Endothelial cell of umbilical vein (primary cell): ENCODE measurements at regions of chr11 and their contacts with region 1.

Region 1: GRCh38 chr11:9757809-9758636 is 94.1 kb downstream of the SWAP70 start:
- DNase-seq: peak; percentile 77
- H3K4me3 ChIP-seq: peak overlapping the region in 2 of 3 experiments; percentile 33 to 37
- H3K27ac ChIP-seq: peak overlapping the region; percentile 67
- H3K4me1 ChIP-seq: peaks cover 34% of the 10 kb centered on the region
- H3K27me3 ChIP-seq: no peaks in the 10 kb centered on the region
- CTCF ChIP-seq: peak; percentile 67 to 92
- POLR2A ChIP-seq: peak; percentile 85

Region 2: GRCh38 chr11:9527481-9528140 is 230.4 kb before region 1 on chr11:
- CTCF ChIA-PET with region 1: no interaction called
- POLR2A ChIA-PET with region 1: no interaction called
- dilution Hi-C with region 1: no loop called
- intact Hi-C with region 1: loop called (anchors 5 kb)
- DNase-seq: peak; percentile 96
- H3K4me3 ChIP-seq: peak overlapping the region in 1 of 3 experiments; percentile 20
- H3K27ac ChIP-seq: peak overlapping the region; percentile 82
- H3K4me1 ChIP-seq: peaks cover 27% of the 10 kb centered on the region
- H3K27me3 ChIP-seq: no peaks in the 10 kb centered on the region
- CTCF ChIP-seq: no peak
- POLR2A ChIP-seq: peak; percentile 21

Region 3: DNA sequence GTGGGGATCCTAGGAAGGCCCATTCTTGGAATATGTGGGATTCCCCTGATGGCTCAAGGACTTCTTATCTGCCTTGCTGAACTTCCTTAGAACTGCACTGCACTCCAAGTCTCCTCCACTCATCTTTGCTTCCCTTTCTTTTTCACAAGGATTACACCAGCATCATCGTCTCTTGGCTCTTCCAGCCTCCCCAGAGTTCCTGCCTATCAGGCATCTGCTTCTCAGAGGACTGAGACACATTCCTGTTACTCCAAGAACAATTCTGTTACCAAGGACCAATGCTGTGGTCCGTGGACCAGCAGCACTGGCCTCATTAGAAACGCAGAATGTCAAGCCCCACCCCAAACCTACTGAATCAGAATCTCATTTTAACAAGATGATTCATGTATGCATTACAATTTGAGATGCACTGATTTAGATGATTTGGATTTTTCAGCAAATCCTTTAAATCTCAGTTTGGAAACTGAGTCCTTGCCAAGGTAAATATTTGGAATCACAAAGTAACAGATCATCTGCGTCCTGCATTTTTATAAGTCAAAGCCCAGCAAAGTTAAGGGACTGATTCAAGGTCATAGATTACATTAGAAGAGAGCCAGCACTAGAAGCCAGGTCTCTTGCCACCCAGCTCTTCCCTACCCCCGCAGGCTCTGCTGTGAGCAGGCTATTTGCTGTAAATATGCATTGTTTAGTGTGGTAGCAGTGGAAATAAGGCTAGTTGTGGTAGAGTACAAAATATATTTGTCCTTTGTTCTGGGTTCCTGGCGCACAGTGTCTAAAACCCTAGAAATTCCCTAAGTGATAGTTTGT is 16.8 kb after region 1 on chr11:
- CTCF ChIA-PET with region 1: no interaction called
- POLR2A ChIA-PET with region 1: no interaction called
- dilution Hi-C with region 1: no loop called
- intact Hi-C with region 1: no loop called
- DNase-seq: peak; percentile 35
- H3K4me3 ChIP-seq: no peak overlapping the region
- H3K27ac ChIP-seq: no peak overlapping the region
- H3K4me1 ChIP-seq: peaks cover 6% of the 10 kb centered on the region
- H3K27me3 ChIP-seq: no peaks in the 10 kb centered on the region
- CTCF ChIP-seq: no peak
- POLR2A ChIP-seq: no peak

Region 4: GRCh38 chr11:9861860-9862725 is 104.1 kb after region 1 on chr11:
- CTCF ChIA-PET with region 1: interaction called, 7 read pairs
- POLR2A ChIA-PET with region 1: no interaction called
- dilution Hi-C with region 1: no loop called
- intact Hi-C with region 1: loop called (anchors 1 kb)
- DNase-seq: peak; percentile 74
- H3K4me3 ChIP-seq: no peak overlapping the region
- H3K27ac ChIP-seq: no peak overlapping the region
- H3K4me1 ChIP-seq: peaks cover 40% of the 10 kb centered on the region
- H3K27me3 ChIP-seq: no peaks in the 10 kb centered on the region
- CTCF ChIP-seq: peak; percentile 66 to 74
- POLR2A ChIP-seq: no peak

Region 5: DNA sequence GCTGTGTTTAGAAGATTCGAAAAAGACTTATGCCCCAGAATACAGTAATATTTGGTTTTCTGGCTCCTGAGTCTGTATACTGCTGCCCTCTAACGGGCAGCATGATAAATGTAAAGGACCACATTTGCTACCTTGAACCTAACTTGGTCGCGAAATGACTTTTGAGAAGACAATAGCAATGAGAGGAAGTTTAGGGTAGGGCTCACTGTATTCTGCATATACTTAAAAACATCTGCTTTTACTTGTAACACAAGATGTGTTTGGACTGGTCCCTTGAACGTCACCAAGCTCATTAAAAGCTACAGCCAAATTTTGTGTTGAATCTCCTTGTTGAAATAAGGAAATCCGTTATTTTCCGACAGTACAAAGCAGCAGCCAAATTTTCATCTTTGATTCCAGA is 215.0 kb after region 1 on chr11:
- CTCF ChIA-PET with region 1: interaction called, 54 read pairs
- POLR2A ChIA-PET with region 1: no interaction called
- dilution Hi-C with region 1: no loop called
- intact Hi-C with region 1: loop called (anchors 1 kb)
- DNase-seq: peak; percentile 74
- H3K4me3 ChIP-seq: no peak overlapping the region
- H3K27ac ChIP-seq: no peak overlapping the region
- H3K4me1 ChIP-seq: peaks cover 14% of the 10 kb centered on the region
- H3K27me3 ChIP-seq: no peaks in the 10 kb centered on the region
- CTCF ChIP-seq: peak; percentile 58 to 61
- POLR2A ChIP-seq: no peak

Region 6: DNA sequence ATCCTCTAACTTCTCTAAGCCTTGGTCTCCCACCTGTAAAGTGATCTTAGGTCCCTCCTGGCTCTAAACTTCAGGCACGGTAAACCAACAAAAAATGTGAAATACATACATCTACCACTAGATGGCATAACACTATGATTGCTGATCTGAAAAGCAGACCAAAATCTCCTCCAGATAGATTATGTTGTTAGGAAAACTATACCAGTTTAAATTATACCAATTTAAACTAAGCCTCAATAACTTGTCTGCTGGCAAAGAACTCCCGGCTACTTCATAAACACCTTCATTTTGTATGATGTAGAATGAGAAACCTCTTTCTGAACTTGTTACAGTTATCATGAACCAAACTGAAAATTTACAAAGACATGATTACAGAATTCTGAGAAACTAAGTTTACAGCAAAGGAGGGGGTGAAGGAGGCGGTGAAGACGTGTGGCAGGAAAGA is 450.1 kb after region 1 on chr11:
- CTCF ChIA-PET with region 1: interaction called, 4 read pairs
- POLR2A ChIA-PET with region 1: no interaction called
- dilution Hi-C with region 1: no loop called
- intact Hi-C with region 1: loop called (anchors 1 kb)
- DNase-seq: peak; percentile 73
- H3K4me3 ChIP-seq: no peak overlapping the region
- H3K27ac ChIP-seq: no peak overlapping the region
- H3K4me1 ChIP-seq: no peaks in the 10 kb centered on the region
- H3K27me3 ChIP-seq: no peaks in the 10 kb centered on the region
- CTCF ChIP-seq: peak; percentile 39 to 41
- POLR2A ChIP-seq: no peak

Region 7: DNA sequence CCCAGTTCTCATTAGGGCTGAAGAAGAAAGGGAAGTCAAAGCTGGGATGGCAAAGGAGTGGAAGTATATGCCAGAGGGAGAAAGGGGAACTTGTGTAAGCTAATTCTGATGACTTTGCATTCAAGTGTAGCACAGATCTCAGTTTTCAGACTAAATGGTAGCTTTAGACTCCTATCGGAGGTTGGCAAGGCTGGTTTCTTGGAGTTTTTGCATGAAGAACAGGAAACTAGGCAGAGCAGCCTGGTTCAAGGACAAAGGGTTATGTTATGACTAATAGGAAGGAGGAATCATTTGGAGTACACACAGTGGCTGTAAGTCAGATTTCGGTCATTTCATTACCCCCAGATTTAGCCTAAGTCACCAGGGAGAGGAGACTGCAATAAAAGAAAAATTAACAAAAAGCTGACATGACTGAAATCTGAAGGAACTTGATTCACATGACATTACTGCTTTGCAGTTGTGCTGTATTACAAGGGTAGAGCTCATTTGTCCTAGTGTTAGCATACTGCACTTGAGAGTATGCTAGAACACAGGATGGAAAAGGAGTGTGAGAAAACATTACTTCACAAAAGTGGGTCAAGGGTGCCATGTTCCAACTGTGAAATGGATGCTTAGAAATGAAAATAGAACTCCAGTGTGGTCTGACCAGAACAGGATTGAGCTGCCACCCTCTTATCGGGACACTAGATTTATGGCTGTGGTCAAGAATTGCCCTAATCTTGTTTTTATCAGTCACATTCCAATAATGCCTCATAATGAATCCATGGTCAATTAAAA is 570.5 kb after region 1 on chr11:
- CTCF ChIA-PET with region 1: interaction called, 10 read pairs
- POLR2A ChIA-PET with region 1: interaction called, 9 read pairs
- dilution Hi-C with region 1: no loop called
- intact Hi-C with region 1: loop called (anchors 1 kb)
- DNase-seq: peak; percentile 94
- H3K4me3 ChIP-seq: peak overlapping the region in 1 of 3 experiments; percentile 14
- H3K27ac ChIP-seq: peak overlapping the region; percentile 84
- H3K4me1 ChIP-seq: peaks cover 67% of the 10 kb centered on the region
- H3K27me3 ChIP-seq: no peaks in the 10 kb centered on the region
- CTCF ChIP-seq: no peak
- POLR2A ChIP-seq: peak; percentile 43

Region 8: DNA sequence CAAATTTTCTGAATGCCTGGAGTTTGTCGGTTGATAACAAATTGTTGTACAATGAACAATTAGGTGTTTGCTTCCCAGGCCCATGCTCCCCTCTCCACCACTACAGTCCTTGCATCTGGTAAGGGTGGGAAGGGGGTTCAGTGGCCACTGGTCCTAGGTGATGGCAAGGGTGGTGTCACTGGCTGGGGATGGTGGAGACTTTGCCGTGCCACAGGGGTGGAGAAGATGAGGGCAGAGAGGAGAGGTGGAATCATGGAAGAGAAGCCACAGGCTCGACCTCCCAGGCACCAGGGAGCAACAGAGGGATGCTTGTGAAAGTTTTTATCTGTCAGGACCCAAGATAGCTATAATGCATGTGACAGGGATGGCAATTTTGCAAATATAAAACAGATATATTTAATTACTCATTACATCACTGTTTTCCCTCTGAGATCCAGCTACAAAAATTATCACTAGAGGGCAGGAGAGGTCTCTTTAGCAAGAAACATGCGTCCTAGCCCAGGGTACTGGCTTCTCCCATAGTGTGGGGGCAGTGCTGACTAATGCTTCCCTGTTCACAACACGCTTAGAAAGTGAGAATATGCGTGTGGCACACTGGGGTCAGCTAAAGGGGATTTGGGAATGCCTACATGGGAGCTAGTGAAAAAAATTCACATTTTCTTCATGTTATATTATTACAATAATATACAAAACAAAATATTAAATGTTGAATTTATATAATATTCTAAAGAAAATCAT is 648.0 kb after region 1 on chr11:
- CTCF ChIA-PET with region 1: interaction called, 4 read pairs
- POLR2A ChIA-PET with region 1: no interaction called
- dilution Hi-C with region 1: no loop called
- intact Hi-C with region 1: loop called (anchors 5 kb)
- DNase-seq: peak; percentile 89
- H3K4me3 ChIP-seq: no peak overlapping the region
- H3K27ac ChIP-seq: no peak overlapping the region
- H3K4me1 ChIP-seq: peaks cover 26% of the 10 kb centered on the region
- H3K27me3 ChIP-seq: no peaks in the 10 kb centered on the region
- CTCF ChIP-seq: peak; percentile 56 to 73
- POLR2A ChIP-seq: no peak